Endothelial cell of umbilical vein (primary cell): ENCODE measurements at regions of chr3 and their contacts with region 1.

Region 1: GRCh38 chr3:9986237-9986725 is 360 bp downstream of the EMC3 start:
- DNase-seq: no peak
- H3K4me3 ChIP-seq: peak overlapping the region; percentile 45 to 71 (median 65)
- H3K27ac ChIP-seq: peak overlapping the region; percentile 54
- H3K4me1 ChIP-seq: peaks cover 17% of the 10 kb centered on the region
- H3K27me3 ChIP-seq: no peaks in the 10 kb centered on the region
- CTCF ChIP-seq: no peak
- POLR2A ChIP-seq: no peak

Region 2: GRCh38 chr3:10010486-10011465 is 24.5 kb after region 1 on chr3:
- CTCF ChIA-PET with region 1: interaction called, 4 read pairs
- POLR2A ChIA-PET with region 1: interaction called, 4 read pairs
- dilution Hi-C with region 1: no loop called
- intact Hi-C with region 1: loop called (anchors 1 kb)
- DNase-seq: peak; percentile 93
- H3K4me3 ChIP-seq: peak overlapping the region; percentile 49 to 71 (median 66)
- H3K27ac ChIP-seq: no peak overlapping the region
- H3K4me1 ChIP-seq: peaks cover 21% of the 10 kb centered on the region
- H3K27me3 ChIP-seq: no peaks in the 10 kb centered on the region
- CTCF ChIP-seq: no peak
- POLR2A ChIP-seq: peak; percentile 41

Region 3: GRCh38 chr3:10026084-10026890 is 40.0 kb after region 1 on chr3 and contains the start of gene FANCD2:
- CTCF ChIA-PET with region 1: no interaction called
- POLR2A ChIA-PET with region 1: interaction called, 7 read pairs
- dilution Hi-C with region 1: no loop called
- intact Hi-C with region 1: loop called (anchors 1 kb)
- DNase-seq: peak; percentile 92
- H3K4me3 ChIP-seq: peak within 1 kb of the TSS; percentile 55 to 84 (median 81)
- H3K27ac ChIP-seq: peak within 1 kb of the TSS; percentile 88
- H3K4me1 ChIP-seq: peaks cover 13% of the 10 kb centered on the region
- H3K27me3 ChIP-seq: no peaks in the 10 kb centered on the region
- CTCF ChIP-seq: no peak
- POLR2A ChIP-seq: peak; percentile 79
- total RNA-seq, gene FANCD2: 23.4 and 26.8 TPM in 2 replicates

Region 4: DNA sequence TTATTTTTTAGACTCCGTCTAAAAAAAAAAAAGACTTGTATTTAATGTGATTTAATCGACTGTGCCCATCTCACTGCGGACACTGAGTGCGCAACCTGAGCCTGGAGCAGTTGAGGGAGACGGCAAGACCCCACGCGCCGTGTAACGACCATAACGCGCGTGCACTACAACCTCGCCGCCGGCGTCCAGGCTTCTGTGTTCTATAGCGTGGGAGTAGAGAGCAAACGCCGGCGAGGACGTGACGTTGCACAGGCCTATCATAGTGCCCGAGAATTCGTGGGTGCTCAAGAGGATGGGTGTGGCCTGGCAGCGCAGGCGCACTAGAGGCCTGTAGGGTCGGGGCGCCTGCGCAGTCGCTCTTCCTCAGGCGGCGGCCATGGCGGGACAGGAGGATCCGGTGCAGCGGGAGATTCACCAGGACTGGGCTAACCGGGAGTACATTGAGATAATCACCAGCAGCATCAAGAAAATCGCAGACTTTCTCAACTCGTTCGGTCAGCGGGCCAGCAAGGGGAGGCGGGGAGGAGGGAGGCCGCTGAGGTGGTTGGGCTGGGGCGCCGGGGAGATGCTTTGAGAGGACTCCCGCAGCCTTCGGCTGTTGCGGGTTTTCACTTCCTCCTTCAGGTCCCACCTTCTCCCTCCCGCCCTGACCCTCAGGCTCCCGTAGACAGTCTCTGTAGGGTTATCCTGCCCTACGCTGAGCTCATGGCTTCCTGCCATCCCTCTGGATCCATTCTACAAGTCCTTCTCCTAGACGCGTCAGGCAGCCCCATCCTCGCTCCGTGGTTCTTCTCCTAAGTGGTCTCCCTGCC is 129.3 kb after region 1 on chr3 and contains the start of gene BRK1:
- CTCF ChIA-PET with region 1: no interaction called
- POLR2A ChIA-PET with region 1: no interaction called
- dilution Hi-C with region 1: no loop called
- intact Hi-C with region 1: loop called (anchors 10 kb)
- DNase-seq: peak; percentile 96
- H3K4me3 ChIP-seq: peak within 1 kb of the TSS; percentile 63 to 87 (median 68)
- H3K27ac ChIP-seq: peak within 1 kb of the TSS; percentile 63
- H3K4me1 ChIP-seq: peaks cover 9% of the 10 kb centered on the region
- H3K27me3 ChIP-seq: no peaks in the 10 kb centered on the region
- CTCF ChIP-seq: no peak
- POLR2A ChIP-seq: peak; percentile 98
- total RNA-seq, gene BRK1: 123 and 133 TPM in 2 replicates